IMR-90 (cell line): ENCODE measurements at regions of chr15 and their contacts with region 1.

Region 1: DNA sequence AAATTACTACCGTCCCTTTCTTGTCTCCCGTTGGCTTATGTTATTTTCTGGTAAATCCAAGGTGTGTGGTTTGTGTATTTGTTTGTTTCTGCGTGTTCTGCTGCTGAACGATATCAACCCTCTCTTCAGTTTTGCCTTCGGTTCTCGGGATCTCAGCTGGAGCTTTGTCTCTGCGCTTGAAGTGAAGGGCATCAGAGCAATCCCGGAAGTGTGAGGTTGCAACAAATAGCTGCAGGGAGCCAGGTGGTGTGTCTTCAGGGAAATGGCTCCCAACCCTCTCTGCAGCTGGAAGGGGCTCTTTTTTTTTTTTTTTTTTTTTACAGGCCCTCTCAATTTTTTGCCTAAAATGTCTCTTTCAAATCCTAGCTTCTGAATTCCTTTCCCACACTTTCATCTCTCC is 116.4 kb upstream of the RGMA start:
- DNase-seq: no peak
- ATAC-seq: no peak
- H3K4me3 ChIP-seq: no peak overlapping the region
- H3K27ac ChIP-seq: no peak overlapping the region
- H3K4me1 ChIP-seq: no peaks in the 10 kb centered on the region
- H3K27me3 ChIP-seq: no peaks in the 10 kb centered on the region
- CTCF ChIP-seq: no peak
- POLR2A ChIP-seq: no peak
- RAD21 ChIP-seq: no peak

Region 2: GRCh38 chr15:93072011-93072410 is 133.4 kb before region 1 on chr15:
- CTCF ChIA-PET with region 1: no interaction called
- POLR2A ChIA-PET with region 1: no interaction called
- dilution Hi-C with region 1: no loop called
- in situ Hi-C with region 1: no loop called
- intact Hi-C with region 1: no loop called
- DNase-seq: peak; percentile 14
- ATAC-seq: peak; percentile 16; the same call in 1 of the 2 replicates
- H3K4me3 ChIP-seq: peak overlapping the region; percentile 56; the same call in 1 of the 2 replicates
- H3K27ac ChIP-seq: no peak overlapping the region
- H3K4me1 ChIP-seq: no peaks in the 10 kb centered on the region; the same call in 1 of the 2 replicates
- H3K27me3 ChIP-seq: peaks cover 46% of the 10 kb centered on the region
- CTCF ChIP-seq: no peak
- POLR2A ChIP-seq: no peak
- RAD21 ChIP-seq: no peak

Region 3: GRCh38 chr15:93121107-93121506 is 84.3 kb before region 1 on chr15:
- CTCF ChIA-PET with region 1: no interaction called
- POLR2A ChIA-PET with region 1: interaction called, 13 read pairs
- dilution Hi-C with region 1: no loop called
- in situ Hi-C with region 1: no loop called
- intact Hi-C with region 1: no loop called
- DNase-seq: no peak
- ATAC-seq: no peak
- H3K4me3 ChIP-seq: no peak overlapping the region
- H3K27ac ChIP-seq: no peak overlapping the region
- H3K4me1 ChIP-seq: no peaks in the 10 kb centered on the region
- H3K27me3 ChIP-seq: no peaks in the 10 kb centered on the region
- CTCF ChIP-seq: no peak
- POLR2A ChIP-seq: no peak
- RAD21 ChIP-seq: no peak